AG04450 (cell line): ENCODE measurements at regions of chr7 and their contacts with region 1.

Region 1: DNA sequence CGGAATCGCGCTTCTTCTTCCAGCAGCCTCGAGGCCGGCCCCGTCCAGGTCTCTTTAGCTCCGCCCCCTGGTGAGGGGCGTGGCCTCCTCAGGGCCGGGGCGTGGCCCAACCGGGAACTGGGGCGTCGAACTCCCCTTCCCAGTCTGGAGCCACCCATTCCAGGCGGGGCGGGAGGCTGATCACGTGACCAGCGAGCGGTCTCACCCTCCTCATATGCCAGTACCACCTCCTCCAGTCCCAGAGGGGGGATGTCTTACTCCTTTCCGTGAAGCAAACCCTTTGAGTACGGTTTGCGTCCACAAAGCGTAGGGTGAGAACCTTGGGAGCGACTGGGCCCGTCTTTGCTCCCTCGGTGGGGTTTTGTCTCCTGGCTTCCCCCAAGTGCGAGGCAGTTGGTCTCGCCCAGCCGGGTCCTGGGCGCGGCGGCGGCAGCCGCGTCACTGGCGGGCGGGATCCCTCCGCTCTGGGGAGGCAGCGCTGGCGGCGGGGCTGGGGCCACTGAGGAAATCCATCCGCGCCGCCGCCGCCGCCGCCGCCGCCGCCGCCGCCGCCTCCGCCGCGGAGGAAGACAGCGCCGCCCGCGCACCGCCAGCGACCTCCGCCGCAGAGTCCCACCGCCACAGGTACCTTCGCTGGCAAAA is at the start of gene GNB2:
- DNase-seq: peak; percentile 99
- H3K4me3 ChIP-seq: peak within 1 kb of the TSS; percentile 90
- H3K27ac ChIP-seq: peak within 1 kb of the TSS; percentile 98
- H3K27me3 ChIP-seq: peaks cover 8% of the 10 kb centered on the region
- CTCF ChIP-seq: no peak
- polyA plus RNA-seq, gene GNB2: 68.4 and 114 TPM in 2 replicates

Region 2: DNA sequence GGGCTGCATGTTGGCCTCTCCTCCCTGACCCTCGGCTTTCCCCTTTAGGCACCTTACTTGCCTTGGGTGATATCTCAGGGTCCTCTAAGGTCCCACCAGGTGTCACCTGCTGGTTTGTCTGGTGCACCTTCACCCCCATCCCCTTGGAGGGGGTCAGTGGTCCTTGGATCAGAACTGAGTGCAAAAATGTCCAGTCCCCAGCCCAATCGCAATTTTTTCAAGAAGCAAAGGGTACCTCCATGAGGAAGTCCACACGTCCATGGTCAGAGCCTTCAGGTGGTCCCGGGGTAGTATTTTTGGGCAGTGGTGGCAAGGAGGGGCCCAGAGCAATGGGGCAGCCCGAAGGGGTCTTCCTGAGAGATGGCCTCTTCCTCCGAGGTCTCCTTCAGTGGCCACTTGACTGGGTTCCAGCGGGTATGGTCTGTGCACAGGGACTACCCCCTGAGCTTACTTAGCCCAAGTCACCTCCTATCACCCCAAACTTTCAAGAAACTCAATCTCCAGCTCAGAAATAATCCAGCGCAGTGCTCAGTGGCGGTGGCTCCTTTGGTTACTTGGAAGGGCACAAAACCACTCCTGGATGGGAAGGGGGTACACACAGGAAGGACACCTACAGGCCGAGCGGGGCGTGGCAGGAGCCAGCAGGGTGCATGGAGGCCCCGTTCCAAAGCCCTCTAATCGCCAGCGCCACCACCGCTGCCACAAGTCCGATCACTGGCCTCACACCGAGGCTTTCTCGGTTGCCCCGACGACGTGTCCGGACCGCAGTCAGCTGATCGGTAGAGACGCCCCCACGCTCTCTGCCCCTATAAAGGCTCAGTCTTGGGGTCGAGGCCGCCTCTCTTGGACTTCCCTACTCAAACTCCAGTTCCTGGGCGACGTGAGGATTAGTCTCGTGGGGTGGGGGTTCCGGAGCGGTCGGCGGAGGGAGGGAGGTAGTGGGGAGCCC is 104.3 kb before region 1 on chr7:
- CTCF ChIA-PET with region 1: interaction called, 3 read pairs
- POLR2A ChIA-PET with region 1: interaction called, 13 read pairs
- DNase-seq: no peak
- H3K4me3 ChIP-seq: peak overlapping the region; percentile 29; the same call in 1 of the 2 replicates
- H3K27ac ChIP-seq: no peak overlapping the region
- H3K27me3 ChIP-seq: peaks cover 2% of the 10 kb centered on the region
- CTCF ChIP-seq: peak; percentile 41

Region 3: DNA sequence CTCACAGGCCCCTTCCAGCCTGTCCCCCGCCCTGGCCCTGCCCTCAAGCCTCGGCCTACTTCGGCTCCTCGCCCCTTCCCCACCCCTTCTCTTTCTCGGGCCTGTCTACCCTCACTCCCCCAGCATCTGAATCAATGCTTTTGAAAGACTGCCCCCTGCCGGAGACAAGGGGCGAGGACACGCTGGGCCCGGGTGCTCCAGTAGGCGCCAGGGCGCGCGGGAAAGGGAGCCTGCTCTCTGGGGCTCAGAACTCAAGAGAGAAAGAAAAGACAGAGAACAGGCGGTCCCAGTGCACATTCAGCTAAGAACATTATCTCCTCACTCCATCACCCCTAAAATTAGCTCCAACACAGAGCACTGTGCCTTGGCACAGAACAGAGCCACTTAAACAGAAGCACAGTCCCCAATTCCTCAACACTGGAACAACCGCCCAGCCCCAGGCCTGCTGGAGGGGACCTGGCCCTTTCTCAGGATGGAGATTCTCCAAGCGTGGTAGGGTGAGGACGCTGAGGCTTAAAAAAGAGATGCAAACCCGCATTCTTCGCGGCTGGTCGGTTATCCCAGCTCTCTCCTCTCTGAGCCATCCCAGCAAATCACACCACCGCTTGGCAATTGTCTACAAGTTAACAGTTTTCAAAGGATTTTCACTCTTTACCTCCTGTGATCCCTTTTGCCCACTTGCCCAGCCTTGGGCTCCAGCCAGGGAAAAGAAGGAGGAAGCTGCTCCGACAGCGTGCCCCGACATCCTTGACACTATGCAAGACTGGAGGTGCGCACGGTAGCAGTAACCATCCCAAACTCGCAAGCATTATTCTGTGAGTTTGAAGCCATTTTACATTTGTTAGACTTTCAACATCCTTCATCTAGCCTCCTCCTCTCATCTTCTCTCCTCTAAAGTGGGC is 18.5 kb after region 1 on chr7:
- CTCF ChIA-PET with region 1: interaction called, 34 read pairs
- POLR2A ChIA-PET with region 1: interaction called, 4 read pairs
- DNase-seq: no peak
- H3K4me3 ChIP-seq: peak overlapping the region; percentile 80
- H3K27ac ChIP-seq: no peak overlapping the region
- H3K27me3 ChIP-seq: peaks cover 2% of the 10 kb centered on the region
- CTCF ChIP-seq: peak; percentile 90

Region 4: DNA sequence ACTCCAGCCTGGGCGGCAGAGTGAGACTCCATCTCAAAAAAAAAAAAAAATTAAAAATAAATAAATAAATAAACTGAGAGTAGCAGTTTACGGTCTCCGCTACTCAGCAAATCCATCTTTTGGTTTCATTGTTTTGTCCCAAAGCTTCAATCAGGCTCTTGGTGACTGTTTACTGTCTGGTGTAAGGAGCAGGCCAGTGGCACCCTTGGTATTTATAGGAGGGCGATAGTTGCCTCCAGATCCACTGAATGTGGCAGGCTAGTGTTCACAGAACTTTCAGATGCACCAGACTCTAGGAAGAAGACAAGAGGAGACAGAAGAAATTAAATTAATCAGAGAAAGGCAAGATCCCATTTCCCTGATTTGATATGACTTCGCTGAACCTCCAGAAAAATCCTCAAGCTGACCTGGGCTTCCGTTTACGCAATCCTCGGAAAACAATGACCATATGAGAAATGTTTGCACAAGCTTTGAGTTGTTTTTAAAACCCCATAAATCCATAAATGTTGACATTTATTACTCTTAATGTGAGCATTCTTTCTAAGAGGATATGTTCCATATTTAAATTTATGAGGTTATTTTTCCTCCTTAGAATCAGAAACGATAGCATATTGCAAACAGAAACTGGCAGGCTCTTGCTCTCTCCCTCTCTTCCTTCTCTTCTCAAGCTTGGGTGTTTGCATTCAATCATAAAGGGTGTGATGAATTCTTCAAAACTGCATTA is 268.8 kb after region 1 on chr7:
- CTCF ChIA-PET with region 1: no interaction called
- POLR2A ChIA-PET with region 1: no interaction called
- DNase-seq: no peak
- H3K4me3 ChIP-seq: no peak overlapping the region
- H3K27ac ChIP-seq: no peak overlapping the region
- H3K27me3 ChIP-seq: peaks cover 9% of the 10 kb centered on the region
- CTCF ChIP-seq: no peak